Heart left ventricle (tissue), 16 donors: ENCODE measurements at regions of chr10 and their contacts with region 1.

Region 1: GRCh38 chr10:125257521-125258097 is 97.2 kb upstream of the CTBP2 start:
- DNase-seq: no peak
- ATAC-seq: no peak
- H3K4me3 ChIP-seq: no peak overlapping the region
- H3K27ac ChIP-seq: no peak overlapping the region
- H3K4me1 ChIP-seq: no peaks in the 10 kb centered on the region
- H3K27me3 ChIP-seq: no peaks in the 10 kb centered on the region
- CTCF ChIP-seq: no peak
- POLR2A ChIP-seq: no peak

Region 2: DNA sequence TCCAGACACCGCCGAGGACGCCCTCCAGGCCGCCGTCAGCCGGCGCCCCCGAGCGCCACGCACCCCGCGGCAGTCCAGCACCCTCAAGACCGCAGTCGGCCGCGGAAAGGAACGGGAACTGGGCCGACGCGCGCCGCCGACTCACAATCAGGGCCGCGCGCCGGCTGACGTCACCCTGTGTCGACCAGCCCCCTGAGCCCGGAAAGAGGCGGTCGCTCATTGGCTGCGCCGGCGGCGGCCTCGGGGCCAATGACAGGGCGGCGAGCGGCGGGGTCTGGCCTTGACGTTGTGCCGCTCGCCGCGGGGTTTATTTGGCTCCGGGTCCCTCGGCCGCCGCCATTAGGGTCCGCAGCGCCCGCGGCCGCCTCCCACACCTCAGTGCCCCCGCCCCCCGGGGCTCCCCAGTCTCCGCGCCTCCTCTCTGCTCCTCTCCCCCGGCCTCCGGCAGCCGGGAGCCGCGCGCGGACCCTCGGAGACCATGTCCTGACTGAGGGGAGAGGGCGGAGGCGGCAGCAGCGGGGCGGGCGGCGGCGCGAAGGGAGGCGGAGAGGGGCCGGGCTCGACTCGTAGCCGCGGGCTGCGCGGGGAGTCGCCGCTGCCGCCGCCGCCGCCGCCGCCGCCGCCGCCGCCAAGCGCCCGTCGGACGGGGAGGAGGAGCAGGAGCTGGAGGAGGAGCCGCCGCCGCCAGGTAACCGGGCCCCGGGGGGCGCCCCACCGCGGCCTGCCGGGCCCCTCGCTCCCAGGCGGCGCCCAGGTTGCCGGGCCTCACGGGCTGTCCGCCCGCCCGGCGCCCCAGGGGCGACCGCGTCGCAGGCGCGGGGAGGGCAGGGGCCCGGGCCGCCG is 340.8 kb before region 1 on chr10:
- intact Hi-C with region 1: no loop called
- DNase-seq: peak; percentile 99 to 100 (median 99)
- ATAC-seq: peak; percentile 98 to 99 (median 98)
- H3K4me3 ChIP-seq: peak overlapping the region; percentile 80 to 97 (median 88)
- H3K27ac ChIP-seq: peak overlapping the region; percentile 92 to 99 (median 96)
- H3K4me1 ChIP-seq: peaks cover 5 to 52% (median 40%) of the 10 kb centered on the region in 12 donors
- H3K27me3 ChIP-seq: no peaks in the 10 kb centered on the region
- CTCF ChIP-seq: peak in 1 of 12 donors; percentile 5
- POLR2A ChIP-seq: peak; percentile 85 to 98

Region 3: GRCh38 chr10:125274961-125275360 is 17.4 kb after region 1 on chr10:
- intact Hi-C with region 1: loop called in 1 of 10 experiments (anchors 1 kb)
- DNase-seq: no peak
- ATAC-seq: no peak
- H3K4me3 ChIP-seq: no peak overlapping the region
- H3K27ac ChIP-seq: no peak overlapping the region
- H3K4me1 ChIP-seq: no peaks in the 10 kb centered on the region
- H3K27me3 ChIP-seq: peaks cover 0 to 4% (median 0%) of the 10 kb centered on the region in 9 donors
- CTCF ChIP-seq: no peak
- POLR2A ChIP-seq: no peak

Region 4: GRCh38 chr10:125605167-125605566 is 347.6 kb after region 1 on chr10:
- intact Hi-C with region 1: no loop called
- DNase-seq: no peak
- ATAC-seq: no peak
- H3K4me3 ChIP-seq: no peak overlapping the region
- H3K27ac ChIP-seq: no peak overlapping the region
- H3K4me1 ChIP-seq: no peaks in the 10 kb centered on the region
- H3K27me3 ChIP-seq: peaks cover 0 to 10% (median 0%) of the 10 kb centered on the region in 9 donors
- CTCF ChIP-seq: no peak
- POLR2A ChIP-seq: no peak